Esophagus muscularis mucosa (tissue), 4 donors: ENCODE measurements at regions of chr13 and their contacts with region 1.

Region 1: DNA sequence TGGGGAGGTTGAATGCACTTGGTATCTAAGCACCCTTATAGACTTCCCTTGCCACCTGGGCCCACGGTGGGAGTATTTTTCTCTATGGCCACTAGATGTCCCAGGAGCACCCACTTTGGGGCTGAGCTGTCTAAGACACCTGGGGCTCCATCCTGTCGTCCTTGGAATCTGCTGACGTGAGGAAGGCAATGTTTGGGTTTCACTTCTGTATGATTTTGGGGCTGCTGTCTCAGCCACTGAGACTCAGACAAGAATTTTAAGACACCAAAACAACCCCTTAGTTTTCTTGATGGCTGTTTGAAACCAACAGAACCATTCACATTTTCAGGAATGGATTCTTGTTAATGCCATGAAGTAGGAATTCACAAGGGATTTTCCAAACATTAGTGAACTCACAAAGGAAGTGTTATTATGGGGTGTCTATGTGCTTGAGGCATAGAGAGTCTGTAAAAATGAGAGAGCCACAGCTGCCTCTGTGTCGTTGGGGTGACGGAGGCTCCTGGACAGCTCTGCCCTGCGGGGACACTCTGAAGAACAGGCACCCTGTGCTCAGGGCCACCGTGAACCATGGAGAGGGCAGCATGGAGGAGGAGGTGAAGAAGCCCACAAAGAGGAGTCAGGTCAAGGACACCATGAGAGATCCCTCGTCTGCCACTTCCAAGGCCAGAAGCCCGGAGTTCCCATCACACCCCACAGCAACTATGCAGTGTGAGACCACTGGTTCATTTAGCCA is 106.8 kb upstream of the SPATA13 start:
- DNase-seq: no peak
- H3K4me3 ChIP-seq: no peak overlapping the region
- H3K27ac ChIP-seq: peak overlapping the region; percentile 61 to 73 (median 64)
- H3K4me1 ChIP-seq: peaks cover 15 to 46% (median 36%) of the 10 kb centered on the region in 4 donors
- H3K27me3 ChIP-seq: no peaks in the 10 kb centered on the region
- CTCF ChIP-seq: peak; percentile 44 to 69 (median 48)
- EP300 ChIP-seq: no peak
- POLR2A ChIP-seq: no peak

Region 2: GRCh38 chr13:24160454-24161009 is 106.8 kb after region 1 on chr13 and contains the start of gene SPATA13:
- intact Hi-C with region 1: loop called (anchors 10 kb)
- DNase-seq: peak; percentile 96
- H3K4me3 ChIP-seq: peak within 1 kb of the TSS; percentile 68 to 88 (median 73)
- H3K27ac ChIP-seq: peak within 1 kb of the TSS; percentile 65 to 80 (median 72)
- H3K4me1 ChIP-seq: peaks cover 13 to 40% (median 30%) of the 10 kb centered on the region in 4 donors
- H3K27me3 ChIP-seq: peaks cover 0 to 44% (median 4%) of the 10 kb centered on the region in 4 donors
- CTCF ChIP-seq: no peak
- EP300 ChIP-seq: no peak
- POLR2A ChIP-seq: no peak
- total RNA-seq, gene SPATA13: 9.1 to 21.6 (median 17.1) TPM

Region 3: DNA sequence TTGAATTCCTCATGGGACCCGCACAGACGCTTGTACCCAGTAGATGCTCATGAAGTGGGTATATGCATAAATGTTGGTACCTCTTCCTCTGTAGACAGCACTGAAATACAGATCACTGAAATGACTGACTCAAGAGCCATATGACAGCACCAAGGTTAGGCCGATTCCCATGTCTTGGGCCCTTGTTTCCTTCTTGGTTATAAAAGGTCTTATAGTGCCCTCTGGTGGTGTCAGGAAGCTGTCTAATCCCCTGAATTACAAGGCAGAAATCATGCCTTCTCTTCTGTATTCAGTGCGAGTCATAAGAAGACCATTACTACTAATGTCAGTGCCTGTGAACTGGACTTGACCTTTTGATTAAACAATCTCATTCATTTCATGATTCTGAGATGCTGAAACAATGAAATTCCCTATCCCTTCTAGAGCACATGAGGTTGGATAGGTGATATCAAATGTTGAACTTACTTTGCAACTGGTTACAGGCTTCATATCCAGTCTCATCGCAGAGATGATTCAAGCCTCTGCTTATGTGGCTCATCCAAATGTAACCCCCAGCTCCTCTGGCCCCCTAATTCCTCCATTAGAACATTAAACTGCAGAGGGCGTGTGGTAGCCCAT is 166.5 kb after region 1 on chr13:
- intact Hi-C with region 1: loop called (anchors 10 kb)
- DNase-seq: no peak
- H3K4me3 ChIP-seq: no peak overlapping the region
- H3K27ac ChIP-seq: peak overlapping the region in 1 of 4 donors; percentile 8
- H3K4me1 ChIP-seq: peaks cover 20 to 41% (median 30%) of the 10 kb centered on the region in 4 donors
- H3K27me3 ChIP-seq: no peaks in the 10 kb centered on the region
- CTCF ChIP-seq: peak; percentile 71 to 83 (median 82)
- EP300 ChIP-seq: no peak
- POLR2A ChIP-seq: no peak